Caco-2 (cell line): ENCODE measurements at regions of chr22 and their contacts with region 1.

Region 1: GRCh38 chr22:35350539-35351503 is 30.1 kb upstream of the HMOX1 start:
- DNase-seq: peak; percentile 91 to 94
- H3K4me3 ChIP-seq: peak overlapping the region; percentile 43
- H3K4me3 Mint-ChIP-seq: peak overlapping the region; percentile 77
- H3K27ac Mint-ChIP-seq: peak overlapping the region; percentile 15
- H3K4me1 ChIP-seq: peaks cover 10% of the 10 kb centered on the region
- H3K4me1 Mint-ChIP-seq: peaks cover 4% of the 10 kb centered on the region
- H3K27me3 ChIP-seq: no peaks in the 10 kb centered on the region
- H3K27me3 Mint-ChIP-seq: no peaks in the 10 kb centered on the region
- CTCF ChIP-seq: peak; percentile 87 to 93

Region 2: DNA sequence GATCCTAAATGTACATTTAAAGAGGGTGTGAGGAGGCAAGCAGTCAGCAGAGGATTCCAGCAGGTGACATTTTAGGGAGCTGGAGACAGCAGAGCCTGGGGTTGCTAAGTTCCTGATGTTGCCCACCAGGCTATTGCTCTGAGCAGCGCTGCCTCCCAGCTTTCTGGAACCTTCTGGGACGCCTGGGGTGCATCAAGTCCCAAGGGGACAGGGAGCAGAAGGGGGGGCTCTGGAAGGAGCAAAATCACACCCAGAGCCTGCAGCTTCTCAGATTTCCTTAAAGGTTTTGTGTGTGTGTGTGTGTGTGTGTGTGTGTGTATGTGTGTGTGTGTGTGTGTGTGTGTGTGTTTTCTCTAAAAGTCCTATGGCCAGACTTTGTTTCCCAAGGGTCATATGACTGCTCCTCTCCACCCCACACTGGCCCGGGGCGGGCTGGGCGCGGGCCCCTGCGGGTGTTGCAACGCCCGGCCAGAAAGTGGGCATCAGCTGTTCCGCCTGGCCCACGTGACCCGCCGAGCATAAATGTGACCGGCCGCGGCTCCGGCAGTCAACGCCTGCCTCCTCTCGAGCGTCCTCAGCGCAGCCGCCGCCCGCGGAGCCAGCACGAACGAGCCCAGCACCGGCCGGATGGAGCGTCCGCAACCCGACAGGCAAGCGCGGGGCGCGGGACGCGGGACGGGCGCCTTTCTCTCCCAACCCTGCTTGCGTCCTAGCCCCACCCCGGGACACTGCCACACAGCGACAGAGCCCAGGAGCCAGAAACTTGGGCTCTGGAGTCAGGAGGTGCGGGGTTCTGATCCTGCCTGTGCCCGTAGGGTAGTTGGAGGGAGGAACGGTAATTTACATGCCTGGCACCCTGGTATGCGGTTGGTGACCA is 30.0 kb after region 1 on chr22 and contains the start of gene HMOX1:
- CTCF ChIA-PET with region 1: interaction called, 5 read pairs
- POLR2A ChIA-PET with region 1: no interaction called
- intact Hi-C with region 1: loop called (anchors 2 kb)
- DNase-seq: peak; percentile 93 to 95
- H3K4me3 ChIP-seq: peak within 1 kb of the TSS; percentile 83
- H3K4me3 Mint-ChIP-seq: peak within 1 kb of the TSS; percentile 94
- H3K27ac Mint-ChIP-seq: peak within 1 kb of the TSS; percentile 96
- H3K4me1 ChIP-seq: peaks cover 45% of the 10 kb centered on the region
- H3K4me1 Mint-ChIP-seq: peaks cover 40% of the 10 kb centered on the region
- H3K27me3 ChIP-seq: no peaks in the 10 kb centered on the region
- H3K27me3 Mint-ChIP-seq: no peaks in the 10 kb centered on the region
- CTCF ChIP-seq: no peak
- total RNA-seq, gene HMOX1: 68.3 and 93.0 TPM in 2 replicates

Region 3: DNA sequence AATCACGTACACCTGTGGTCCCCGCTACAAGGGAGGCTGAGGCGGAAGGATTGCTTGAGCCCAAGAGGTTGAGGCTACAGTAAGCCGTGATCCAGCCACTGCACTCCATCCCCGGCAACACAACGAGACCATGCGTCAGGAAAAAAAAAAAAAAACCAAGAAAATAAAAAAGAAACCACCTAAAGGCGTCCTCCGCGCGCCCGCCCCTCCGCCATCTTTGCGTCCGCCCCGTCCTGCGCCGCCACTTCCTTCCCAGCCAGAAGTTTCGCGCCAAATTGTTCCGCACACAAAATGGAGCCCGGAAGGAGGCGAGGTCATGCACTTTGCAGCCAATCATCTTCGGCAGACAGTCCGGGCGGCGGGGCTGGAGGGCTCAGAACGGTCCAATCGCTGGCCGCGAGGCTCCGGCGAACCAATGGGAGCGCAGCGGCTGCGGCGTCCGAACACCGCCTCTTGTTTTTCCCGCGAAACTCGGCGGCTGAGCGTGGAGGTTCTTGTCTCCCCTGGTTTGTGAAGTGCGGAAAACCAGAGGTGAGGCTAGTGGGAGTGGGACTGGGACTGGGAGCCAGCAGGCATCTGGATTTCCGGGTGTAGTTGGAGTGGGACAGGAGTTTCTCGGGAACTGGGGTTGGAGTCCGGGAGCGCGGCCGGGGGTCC is 49.0 kb after region 1 on chr22 and contains the start of gene MCM5:
- CTCF ChIA-PET with region 1: interaction called, 4 read pairs
- POLR2A ChIA-PET with region 1: no interaction called
- intact Hi-C with region 1: loop called (anchors 5 kb)
- DNase-seq: peak; percentile 97 to 98
- H3K4me3 ChIP-seq: peak within 1 kb of the TSS; percentile 97
- H3K4me3 Mint-ChIP-seq: peak within 1 kb of the TSS; percentile 97
- H3K27ac Mint-ChIP-seq: peak within 1 kb of the TSS; percentile 98
- H3K4me1 ChIP-seq: peaks cover 5% of the 10 kb centered on the region
- H3K4me1 Mint-ChIP-seq: peaks cover 5% of the 10 kb centered on the region
- H3K27me3 ChIP-seq: no peaks in the 10 kb centered on the region
- H3K27me3 Mint-ChIP-seq: no peaks in the 10 kb centered on the region
- CTCF ChIP-seq: no peak
- total RNA-seq, gene MCM5: 99.6 and 107 TPM in 2 replicates

Region 4: DNA sequence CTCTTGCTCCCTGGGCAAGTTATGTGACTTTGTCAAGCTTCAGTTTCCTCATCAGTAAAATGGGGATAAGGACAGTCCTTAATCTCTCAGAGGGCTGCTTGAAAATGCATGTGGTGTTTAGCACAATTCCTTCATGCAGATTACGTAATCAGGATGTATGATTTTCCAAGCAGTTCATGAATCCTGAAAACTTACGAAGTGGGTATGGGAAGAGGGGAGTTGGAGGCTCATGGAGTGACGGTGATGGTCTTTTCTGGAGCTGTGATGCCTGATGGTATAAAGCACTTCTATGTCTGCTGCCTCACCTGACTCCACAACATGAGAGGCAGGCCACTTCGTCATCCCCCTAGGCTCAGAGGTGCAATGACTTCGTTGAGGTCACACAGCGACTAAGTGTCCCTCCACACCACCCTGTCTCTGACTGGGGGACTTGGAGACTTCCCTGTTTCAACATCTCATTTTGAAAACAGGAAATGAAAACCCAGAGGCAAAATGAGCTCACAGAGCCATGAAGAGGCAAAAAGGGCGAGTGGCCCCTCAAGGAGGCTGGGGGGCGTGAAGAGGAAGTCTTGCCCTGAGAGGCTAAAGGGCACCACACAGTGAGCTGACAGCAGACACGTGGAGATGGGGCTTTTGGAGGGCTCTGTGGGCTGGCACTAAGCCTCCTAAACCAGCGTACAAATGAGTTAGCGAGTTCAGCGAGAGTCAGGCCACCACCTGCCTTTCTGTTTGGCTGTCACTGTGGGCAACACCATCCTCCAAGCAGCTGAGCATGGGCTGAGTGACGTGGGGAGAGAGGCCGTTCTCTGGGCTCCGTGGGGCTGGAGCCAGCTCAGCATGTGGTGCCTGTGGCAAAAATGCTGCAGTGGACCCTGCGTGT is 59.2 kb after region 1 on chr22:
- CTCF ChIA-PET with region 1: interaction called, 3 read pairs
- POLR2A ChIA-PET with region 1: no interaction called
- intact Hi-C with region 1: loop called (anchors 5 kb)
- DNase-seq: no peak
- H3K4me3 ChIP-seq: no peak overlapping the region
- H3K4me3 Mint-ChIP-seq: no peak overlapping the region
- H3K27ac Mint-ChIP-seq: peak overlapping the region; percentile 30
- H3K4me1 ChIP-seq: no peaks in the 10 kb centered on the region
- H3K4me1 Mint-ChIP-seq: peaks cover 6% of the 10 kb centered on the region
- H3K27me3 ChIP-seq: no peaks in the 10 kb centered on the region
- H3K27me3 Mint-ChIP-seq: no peaks in the 10 kb centered on the region
- CTCF ChIP-seq: no peak

Region 5: DNA sequence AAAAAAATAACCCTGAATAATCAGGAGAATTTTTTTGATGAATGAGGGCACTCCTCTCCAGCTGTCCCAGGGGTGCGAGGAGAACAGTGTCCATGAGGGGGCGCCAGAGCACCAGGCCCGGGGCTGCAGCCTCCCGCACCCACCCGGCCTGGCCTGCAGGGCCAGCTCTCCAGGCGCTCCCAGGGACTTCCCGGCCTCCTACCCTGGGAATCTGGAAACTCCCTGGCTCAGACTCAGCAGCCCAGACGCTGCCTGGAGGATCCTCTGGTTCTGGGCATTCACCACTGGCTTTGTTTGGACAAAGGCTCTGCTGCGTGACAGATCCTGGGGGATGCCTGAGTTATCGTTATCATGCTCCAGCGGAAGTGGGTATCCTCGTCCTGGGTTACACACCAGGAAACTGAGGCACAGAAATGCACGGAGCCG is 80.1 kb after region 1 on chr22:
- CTCF ChIA-PET with region 1: interaction called, 6 read pairs
- POLR2A ChIA-PET with region 1: no interaction called
- intact Hi-C with region 1: loop called (anchors 5 kb)
- DNase-seq: peak; percentile 73 to 91
- H3K4me3 ChIP-seq: no peak overlapping the region
- H3K4me3 Mint-ChIP-seq: no peak overlapping the region
- H3K27ac Mint-ChIP-seq: no peak overlapping the region
- H3K4me1 ChIP-seq: no peaks in the 10 kb centered on the region
- H3K4me1 Mint-ChIP-seq: no peaks in the 10 kb centered on the region
- H3K27me3 ChIP-seq: no peaks in the 10 kb centered on the region
- H3K27me3 Mint-ChIP-seq: no peaks in the 10 kb centered on the region
- CTCF ChIP-seq: peak; percentile 86 to 91

Region 6: GRCh38 chr22:35582861-35583670 is 232.2 kb after region 1 on chr22:
- CTCF ChIA-PET with region 1: no interaction called
- POLR2A ChIA-PET with region 1: no interaction called
- intact Hi-C with region 1: loop called (anchors 1 kb)
- DNase-seq: peak; percentile 71 to 77
- H3K4me3 ChIP-seq: no peak overlapping the region
- H3K4me3 Mint-ChIP-seq: no peak overlapping the region
- H3K27ac Mint-ChIP-seq: no peak overlapping the region
- H3K4me1 ChIP-seq: no peaks in the 10 kb centered on the region
- H3K4me1 Mint-ChIP-seq: peaks cover 4% of the 10 kb centered on the region
- H3K27me3 ChIP-seq: no peaks in the 10 kb centered on the region
- H3K27me3 Mint-ChIP-seq: no peaks in the 10 kb centered on the region
- CTCF ChIP-seq: peak; percentile 91 to 92

Region 7: GRCh38 chr22:35627264-35628041 is 276.6 kb after region 1 on chr22:
- CTCF ChIA-PET with region 1: interaction called, 4 read pairs
- POLR2A ChIA-PET with region 1: no interaction called
- intact Hi-C with region 1: loop called (anchors 1 kb)
- DNase-seq: peak; percentile 76 to 79
- H3K4me3 ChIP-seq: peak overlapping the region; percentile 65
- H3K4me3 Mint-ChIP-seq: peak overlapping the region; percentile 79
- H3K27ac Mint-ChIP-seq: peak overlapping the region; percentile 78
- H3K4me1 ChIP-seq: peaks cover 8% of the 10 kb centered on the region
- H3K4me1 Mint-ChIP-seq: peaks cover 18% of the 10 kb centered on the region
- H3K27me3 ChIP-seq: no peaks in the 10 kb centered on the region; the same call in 1 of the 2 replicates
- H3K27me3 Mint-ChIP-seq: no peaks in the 10 kb centered on the region
- CTCF ChIP-seq: peak in 1 of 2 experiments; percentile 68